Prostate gland (tissue), 2 donors: ENCODE measurements at regions of chr9 and their contacts with region 1.

Region 1: DNA sequence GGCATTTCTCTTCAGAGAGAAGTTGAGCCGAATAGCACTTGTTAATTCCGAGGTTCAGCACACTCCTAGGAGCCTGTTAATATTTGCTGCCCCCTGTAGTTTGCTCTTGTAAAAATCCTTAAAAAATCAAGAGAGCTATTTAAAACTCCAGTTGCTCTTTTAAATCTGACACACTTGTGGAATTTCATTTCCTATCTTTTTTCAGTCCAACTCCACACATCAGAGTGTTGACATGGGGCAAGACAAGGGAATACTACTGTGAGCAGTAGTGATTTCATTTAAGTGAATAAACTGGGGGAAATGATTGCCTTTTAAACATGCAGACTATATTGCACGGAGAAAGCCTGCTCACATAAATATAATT is 1096.3 kb upstream of the DMAC1 start:
- DNase-seq: no peak
- H3K4me3 ChIP-seq: no peak overlapping the region
- H3K27ac ChIP-seq: no peak overlapping the region
- H3K4me1 ChIP-seq: no peaks in the 10 kb centered on the region
- H3K27me3 ChIP-seq: no peaks in the 10 kb centered on the region
- CTCF ChIP-seq: peak in 3 of 4 experiments; percentile 47 to 59 (median 51)
- POLR2A ChIP-seq: no peak

Region 2: DNA sequence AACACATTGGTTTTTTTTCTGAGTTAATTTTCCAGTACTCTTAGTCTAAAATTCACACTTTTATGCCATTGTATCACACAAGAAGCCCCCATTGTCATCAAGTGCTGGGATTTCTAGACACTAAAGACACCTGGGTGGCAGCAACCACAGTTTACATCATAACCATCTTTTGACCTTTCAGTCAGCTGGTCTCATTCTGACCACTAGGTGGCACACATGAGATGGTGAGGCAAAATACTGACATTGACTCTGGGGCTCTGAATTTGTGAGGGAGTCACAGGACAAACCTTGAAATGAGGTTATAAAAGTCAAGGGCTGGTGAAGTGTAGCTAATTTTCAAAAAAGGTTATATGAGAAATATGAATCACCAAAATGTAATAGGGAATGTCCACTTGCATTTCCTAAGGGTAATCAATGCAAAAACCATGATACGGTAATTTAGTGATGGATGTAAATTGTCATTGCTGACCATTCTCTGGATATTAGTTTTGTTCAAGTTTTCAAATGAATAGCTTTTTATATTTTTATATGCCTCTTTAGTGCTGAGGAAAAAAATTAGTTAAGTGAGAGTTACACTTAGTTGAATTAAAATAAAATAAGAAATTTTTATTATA is 1325.6 kb before region 1 on chr9:
- intact Hi-C with region 1: loop called (anchors 5 kb)
- DNase-seq: peak; percentile 27
- H3K4me3 ChIP-seq: no peak overlapping the region
- H3K27ac ChIP-seq: no peak overlapping the region
- H3K4me1 ChIP-seq: no peaks in the 10 kb centered on the region
- H3K27me3 ChIP-seq: no peaks in the 10 kb centered on the region
- CTCF ChIP-seq: peak; percentile 58 to 79 (median 66)
- POLR2A ChIP-seq: no peak

Region 3: GRCh38 chr9:8486095-8486494 is 409.7 kb before region 1 on chr9:
- intact Hi-C with region 1: loop called (anchors 5 kb)
- DNase-seq: peak; percentile 4
- H3K4me3 ChIP-seq: no peak overlapping the region
- H3K27ac ChIP-seq: no peak overlapping the region
- H3K4me1 ChIP-seq: no peaks in the 10 kb centered on the region
- H3K27me3 ChIP-seq: no peaks in the 10 kb centered on the region
- CTCF ChIP-seq: peak in 1 of 4 experiments; percentile 11
- POLR2A ChIP-seq: no peak